ENCODE measurements at regions of chr9 and their contacts with region 1.

Region 1: DNA sequence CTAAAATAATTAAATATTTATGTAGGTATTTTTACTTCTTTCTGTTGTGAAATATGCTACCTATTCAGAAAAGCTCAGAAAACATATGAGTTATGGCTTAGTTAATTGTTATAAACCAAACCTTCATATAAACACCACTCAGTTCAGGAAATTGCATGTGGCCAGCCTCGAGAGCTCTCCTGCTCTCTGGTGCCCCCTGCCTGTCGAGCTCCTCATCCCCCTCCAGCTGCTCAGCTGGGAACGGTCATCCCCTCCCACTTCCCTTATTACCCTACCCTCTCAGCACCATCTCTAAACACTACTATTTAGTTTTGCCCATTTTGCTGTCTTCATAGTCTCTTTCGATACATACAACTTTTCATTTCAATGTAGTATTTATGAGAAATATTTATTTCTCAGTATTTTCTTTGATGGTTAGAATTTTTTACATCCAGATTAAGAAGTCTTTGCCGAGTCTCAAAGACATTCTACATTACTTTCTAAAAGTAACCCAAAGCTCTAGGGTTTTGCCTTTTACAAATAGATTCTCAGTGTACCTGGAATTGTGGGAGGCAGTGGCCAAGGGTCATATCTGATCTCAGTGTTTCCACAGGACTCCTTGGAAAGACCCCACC is 51.2 kb upstream of the SEMA4D start:
- DNase-seq: peak; percentile 78 to 83 (median 79)
- H3K4me3 ChIP-seq: no peak overlapping the region
- H3K4me3 Mint-ChIP-seq: peak overlapping the region in 4 of 8 donors; percentile 7 to 52 (median 44)
- H3K27ac ChIP-seq: no peak overlapping the region
- H3K27ac Mint-ChIP-seq: peak overlapping the region in 4 of 7 donors; percentile 50 to 79 (median 60)
- H3K4me1 ChIP-seq: peaks cover 18% of the 10 kb centered on the region
- H3K4me1 Mint-ChIP-seq: peaks cover 7 to 20% (median 14%) of the 10 kb centered on the region in 4 donors
- H3K27me3 ChIP-seq: no peaks in the 10 kb centered on the region
- H3K27me3 Mint-ChIP-seq: peaks cover 0 to 1% of the 10 kb centered on the region in 2 donors

Region 2: GRCh38 chr9:89410641-89411350 is 138.3 kb before region 1 on chr9:
- CTCF ChIA-PET with region 1: interaction called, 85 read pairs
- POLR2A ChIA-PET with region 1: interaction called, 26 read pairs
- intact Hi-C with region 1: loop called (anchors 1 kb)
- DNase-seq: peak in 4 of 5 donors; percentile 30 to 76 (median 32)
- H3K4me3 ChIP-seq: no peak overlapping the region
- H3K4me3 Mint-ChIP-seq: peak overlapping the region in 7 of 8 donors; percentile 58 to 84 (median 80)
- H3K27ac ChIP-seq: peak overlapping the region; percentile 52
- H3K27ac Mint-ChIP-seq: peak overlapping the region; percentile 86 to 95 (median 91)
- H3K4me1 ChIP-seq: peaks cover 100% of the 10 kb centered on the region
- H3K4me1 Mint-ChIP-seq: peaks cover 71 to 98% (median 82%) of the 10 kb centered on the region in 4 donors
- H3K27me3 ChIP-seq: no peaks in the 10 kb centered on the region
- H3K27me3 Mint-ChIP-seq: no peaks in the 10 kb centered on the region

Region 3: DNA sequence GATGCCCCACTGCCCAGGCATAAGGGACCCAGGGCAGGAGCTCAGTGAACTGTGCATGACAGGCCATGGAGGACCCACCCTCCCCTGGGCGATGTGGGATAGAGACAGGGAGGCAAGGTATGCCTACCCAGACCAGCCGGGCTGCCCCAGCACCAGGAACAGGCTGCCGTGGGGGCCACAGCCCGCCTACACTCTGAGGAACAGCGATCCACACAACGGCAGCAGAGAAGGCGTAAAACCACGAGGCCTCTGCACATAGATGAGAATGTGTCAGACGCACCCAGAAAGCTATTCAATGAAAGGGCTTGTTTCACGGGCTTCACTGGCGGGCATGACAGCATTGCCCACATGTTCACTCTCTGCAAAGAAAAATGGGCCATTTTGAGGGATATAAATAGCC is 100.8 kb before region 1 on chr9:
- CTCF ChIA-PET with region 1: interaction called, 29 read pairs
- POLR2A ChIA-PET with region 1: interaction called, 11 read pairs
- intact Hi-C with region 1: no loop called
- DNase-seq: peak in 1 of 5 donors; percentile 65
- H3K4me3 ChIP-seq: peak overlapping the region in 1 of 2 donors; percentile 13
- H3K4me3 Mint-ChIP-seq: peak overlapping the region in 7 of 8 donors; percentile 35 to 90 (median 70)
- H3K27ac ChIP-seq: peak overlapping the region; percentile 49
- H3K27ac Mint-ChIP-seq: peak overlapping the region; percentile 86 to 97 (median 92)
- H3K4me1 ChIP-seq: peaks cover 97% of the 10 kb centered on the region
- H3K4me1 Mint-ChIP-seq: peaks cover 78 to 96% (median 88%) of the 10 kb centered on the region in 4 donors
- H3K27me3 ChIP-seq: no peaks in the 10 kb centered on the region
- H3K27me3 Mint-ChIP-seq: no peaks in the 10 kb centered on the region

Region 4: GRCh38 chr9:89477811-89478630 is 71.1 kb before region 1 on chr9:
- CTCF ChIA-PET with region 1: interaction called, 27 read pairs
- POLR2A ChIA-PET with region 1: interaction called, 46 read pairs
- intact Hi-C with region 1: no loop called
- DNase-seq: peak; percentile 50 to 80 (median 53)
- H3K4me3 ChIP-seq: peak overlapping the region; percentile 52 to 57
- H3K4me3 Mint-ChIP-seq: peak overlapping the region; percentile 77 to 91 (median 86)
- H3K27ac ChIP-seq: peak overlapping the region; percentile 75
- H3K27ac Mint-ChIP-seq: peak overlapping the region; percentile 85 to 97 (median 96)
- H3K4me1 ChIP-seq: peaks cover 88% of the 10 kb centered on the region
- H3K4me1 Mint-ChIP-seq: peaks cover 72 to 94% (median 85%) of the 10 kb centered on the region in 4 donors
- H3K27me3 ChIP-seq: no peaks in the 10 kb centered on the region
- H3K27me3 Mint-ChIP-seq: no peaks in the 10 kb centered on the region

Region 5: DNA sequence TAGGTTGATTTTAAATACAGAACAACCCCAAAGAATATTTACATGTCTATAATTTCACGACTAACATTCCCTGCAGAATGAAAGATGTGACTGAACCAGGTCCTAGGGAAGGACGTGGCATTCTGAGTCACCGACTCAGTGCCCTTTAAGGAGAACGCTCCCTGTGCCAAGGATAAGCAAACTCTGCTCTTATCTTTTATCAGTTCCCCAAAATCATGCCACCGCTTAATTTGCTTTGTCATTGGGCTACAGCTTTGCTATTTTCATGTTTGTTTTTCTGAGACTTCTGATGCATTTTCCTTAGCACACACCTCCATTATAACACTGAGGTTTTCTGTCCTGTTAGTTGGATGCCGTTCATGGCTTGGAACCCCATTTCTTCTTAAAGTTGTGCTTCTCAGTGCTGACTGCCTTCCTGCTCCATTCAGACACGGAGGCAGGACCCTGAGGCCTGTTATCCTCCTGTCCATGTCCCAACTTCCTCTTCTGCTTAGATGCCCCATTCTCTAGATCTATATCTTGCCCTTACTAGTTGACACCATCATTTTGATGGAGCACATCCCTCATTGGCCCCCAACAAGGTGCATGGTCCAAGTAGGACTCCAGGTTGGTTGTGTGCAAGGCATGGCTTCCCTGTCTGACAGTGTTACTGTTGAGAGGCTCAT is 40.1 kb before region 1 on chr9:
- CTCF ChIA-PET with region 1: interaction called, 10 read pairs
- POLR2A ChIA-PET with region 1: interaction called, 4 read pairs
- intact Hi-C with region 1: no loop called
- DNase-seq: no peak
- H3K4me3 ChIP-seq: no peak overlapping the region
- H3K4me3 Mint-ChIP-seq: peak overlapping the region in 2 of 8 donors; percentile 15 to 41
- H3K27ac ChIP-seq: no peak overlapping the region
- H3K27ac Mint-ChIP-seq: peak overlapping the region in 4 of 7 donors; percentile 11 to 72 (median 25)
- H3K4me1 ChIP-seq: peaks cover 47% of the 10 kb centered on the region
- H3K4me1 Mint-ChIP-seq: peaks cover 45 to 88% (median 66%) of the 10 kb centered on the region in 4 donors
- H3K27me3 ChIP-seq: no peaks in the 10 kb centered on the region
- H3K27me3 Mint-ChIP-seq: no peaks in the 10 kb centered on the region

Measured in CD4-positive, alpha-beta memory T cell (primary cell).